Calu3 (cell line): ENCODE measurements at regions of chr6 and their contacts with region 1.

Region 1: GRCh38 chr6:46983007-46983411 is 59.1 kb downstream of the ADGRF1 start:
- DNase-seq: peak; percentile 41
- H3K4me3 Mint-ChIP-seq: peak overlapping the region; percentile 26
- H3K27ac Mint-ChIP-seq: peak overlapping the region; percentile 86
- H3K4me1 Mint-ChIP-seq: peaks cover 57% of the 10 kb centered on the region
- H3K27me3 Mint-ChIP-seq: no peaks in the 10 kb centered on the region
- CTCF ChIP-seq: no peak

Region 2: GRCh38 chr6:46932526-46933319 is 50.3 kb before region 1 on chr6:
- CTCF ChIA-PET with region 1: no interaction called
- intact Hi-C with region 1: loop called (anchors 2 kb)
- DNase-seq: peak; percentile 26
- H3K4me3 Mint-ChIP-seq: peak overlapping the region; percentile 62
- H3K27ac Mint-ChIP-seq: peak overlapping the region; percentile 87
- H3K4me1 Mint-ChIP-seq: peaks cover 76% of the 10 kb centered on the region
- H3K27me3 Mint-ChIP-seq: no peaks in the 10 kb centered on the region
- CTCF ChIP-seq: no peak

Region 3: DNA sequence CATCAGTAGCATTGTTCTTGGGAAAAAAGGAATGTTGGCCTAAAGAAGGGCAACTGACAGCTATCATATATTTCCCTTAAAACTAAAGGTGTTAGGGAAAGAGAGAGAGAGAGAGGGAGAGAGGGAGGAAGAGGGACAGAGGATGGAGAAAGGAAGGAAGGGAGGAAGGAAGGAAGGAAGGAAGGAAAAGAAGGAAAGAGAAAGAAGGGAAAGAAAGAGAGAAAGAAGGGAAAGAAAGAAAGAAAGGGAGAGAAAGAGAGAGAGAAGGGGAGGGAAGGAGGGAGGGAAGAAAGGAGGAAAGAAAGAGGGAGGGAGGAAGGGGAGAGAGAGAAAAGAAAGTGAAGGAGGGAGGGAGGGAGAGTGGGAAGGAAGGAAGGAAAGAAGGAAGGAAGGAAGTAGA is 23.6 kb before region 1 on chr6:
- CTCF ChIA-PET with region 1: interaction called, 11 read pairs
- intact Hi-C with region 1: no loop called
- DNase-seq: no peak
- H3K4me3 Mint-ChIP-seq: no peak overlapping the region
- H3K27ac Mint-ChIP-seq: no peak overlapping the region
- H3K4me1 Mint-ChIP-seq: peaks cover 7% of the 10 kb centered on the region
- H3K27me3 Mint-ChIP-seq: no peaks in the 10 kb centered on the region
- CTCF ChIP-seq: no peak

Region 4: DNA sequence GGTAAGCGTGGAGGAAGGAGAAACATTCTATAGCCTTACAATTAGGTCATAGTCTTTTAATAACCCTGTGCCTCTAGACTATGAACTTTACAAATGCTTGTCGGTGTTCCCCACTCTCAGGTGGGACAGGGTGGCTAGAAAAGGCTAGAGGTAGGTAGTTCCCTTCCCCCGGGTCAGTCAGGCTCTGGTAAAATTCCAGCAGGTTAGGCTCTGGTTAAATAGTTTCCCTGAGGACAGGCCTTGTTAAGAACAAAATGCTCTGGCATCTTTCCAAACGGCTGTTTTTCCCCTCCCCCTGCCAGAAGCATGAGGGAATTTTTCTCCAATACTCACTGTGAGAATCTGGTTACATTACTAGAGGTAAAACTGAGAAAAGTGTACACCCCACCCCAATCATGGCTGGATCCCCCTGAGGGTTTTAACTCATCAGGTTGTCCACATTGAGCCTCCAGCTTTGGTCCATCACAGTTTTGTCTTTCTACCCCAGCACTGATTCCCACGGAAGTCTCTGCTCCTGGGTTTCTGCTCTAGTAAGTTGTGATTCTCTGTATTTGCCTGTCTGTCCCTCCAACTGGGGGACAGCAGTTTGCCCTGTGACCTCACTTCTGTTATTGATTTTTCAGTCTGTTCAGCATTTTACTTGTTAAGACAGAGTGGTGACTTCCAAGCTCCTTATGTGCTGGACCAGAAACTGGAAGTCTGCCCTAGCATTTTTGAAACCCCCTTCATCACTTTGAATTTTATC is 143.8 kb after region 1 on chr6:
- CTCF ChIA-PET with region 1: no interaction called
- intact Hi-C with region 1: no loop called
- DNase-seq: peak; percentile 63
- H3K4me3 Mint-ChIP-seq: peak overlapping the region; percentile 34
- H3K27ac Mint-ChIP-seq: peak overlapping the region; percentile 28
- H3K4me1 Mint-ChIP-seq: peaks cover 53% of the 10 kb centered on the region
- H3K27me3 Mint-ChIP-seq: no peaks in the 10 kb centered on the region
- CTCF ChIP-seq: no peak